A673 (cell line): ENCODE measurements at regions of chrX and their contacts with region 1.

Region 1: GRCh38 chrX:15854712-15855567 is at the start of gene AP1S2:
- DNase-seq: peak; percentile 98
- H3K4me3 ChIP-seq: peak within 1 kb of the TSS; percentile 79
- H3K27ac ChIP-seq: peak within 1 kb of the TSS; percentile 84
- H3K4me1 ChIP-seq: peaks cover 10% of the 10 kb centered on the region
- H3K27me3 ChIP-seq: no peaks in the 10 kb centered on the region
- CTCF ChIP-seq: no peak
- total RNA-seq, gene AP1S2: 55.3 and 59.3 TPM in 2 replicates

Region 2: GRCh38 chrX:15973299-15973698 is 118.4 kb after region 1 on chrX:
- CTCF ChIA-PET with region 1: no interaction called
- POLR2A ChIA-PET with region 1: no interaction called
- intact Hi-C with region 1: loop called (anchors 5 kb)
- DNase-seq: peak; percentile 67
- H3K4me3 ChIP-seq: no peak overlapping the region
- H3K27ac ChIP-seq: no peak overlapping the region
- H3K4me1 ChIP-seq: no peaks in the 10 kb centered on the region
- H3K27me3 ChIP-seq: no peaks in the 10 kb centered on the region
- CTCF ChIP-seq: peak; percentile 56

Region 3: GRCh38 chrX:16033331-16033730 is 178.4 kb after region 1 on chrX:
- CTCF ChIA-PET with region 1: no interaction called
- POLR2A ChIA-PET with region 1: no interaction called
- intact Hi-C with region 1: loop called (anchors 5 kb)
- DNase-seq: no peak
- H3K4me3 ChIP-seq: no peak overlapping the region
- H3K27ac ChIP-seq: no peak overlapping the region
- H3K4me1 ChIP-seq: peaks cover 13% of the 10 kb centered on the region
- H3K27me3 ChIP-seq: no peaks in the 10 kb centered on the region
- CTCF ChIP-seq: no peak